A549 (cell line): ENCODE measurements at regions of chr15 and their contacts with region 1.

Region 1: DNA sequence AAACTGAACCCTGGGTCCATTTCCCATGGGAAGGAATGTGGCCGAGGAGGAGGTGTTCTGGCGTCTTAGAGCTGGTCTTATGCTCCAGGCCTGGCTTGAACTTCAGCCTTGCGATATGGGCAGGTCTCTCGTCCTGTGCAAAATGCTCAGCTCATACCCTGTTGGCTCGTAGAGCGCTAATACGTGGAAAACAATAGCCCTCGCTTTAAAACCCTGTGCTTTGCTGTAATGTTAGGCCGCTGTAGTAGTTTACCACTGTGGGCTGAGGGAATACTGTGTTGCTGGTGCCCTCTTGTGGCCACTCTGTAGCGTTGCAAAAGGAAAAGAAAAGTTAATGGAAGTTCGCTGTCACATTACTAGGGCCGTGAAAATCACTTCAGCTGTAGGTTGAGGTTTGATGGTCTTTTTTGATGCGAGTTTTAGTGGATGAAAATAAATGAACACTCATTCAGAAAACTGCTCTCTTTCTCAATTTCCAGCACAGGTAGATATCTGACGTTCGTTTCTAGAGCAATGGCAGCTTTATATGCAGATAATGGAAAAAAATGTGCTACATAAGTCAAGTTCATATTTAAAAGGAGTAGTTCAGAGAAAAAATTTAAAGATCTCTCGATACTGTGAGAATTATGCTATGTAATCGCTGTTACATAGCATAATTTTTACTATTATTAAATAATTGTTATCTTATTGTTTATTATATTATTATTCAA is 92.9 kb downstream of the MCTP2 start:
- DNase-seq: peak; percentile 38 to 62
- ATAC-seq: peak; percentile 84 to 94
- H3K4me3 ChIP-seq: no peak overlapping the region
- H3K27ac ChIP-seq: no peak overlapping the region
- H3K4me1 ChIP-seq: no peaks in the 10 kb centered on the region
- CTCF ChIP-seq: peak; percentile 79
- EP300 ChIP-seq: no peak
- POLR2A ChIP-seq: no peak
- RAD21 ChIP-seq: peak; percentile 79 to 81

Region 2: DNA sequence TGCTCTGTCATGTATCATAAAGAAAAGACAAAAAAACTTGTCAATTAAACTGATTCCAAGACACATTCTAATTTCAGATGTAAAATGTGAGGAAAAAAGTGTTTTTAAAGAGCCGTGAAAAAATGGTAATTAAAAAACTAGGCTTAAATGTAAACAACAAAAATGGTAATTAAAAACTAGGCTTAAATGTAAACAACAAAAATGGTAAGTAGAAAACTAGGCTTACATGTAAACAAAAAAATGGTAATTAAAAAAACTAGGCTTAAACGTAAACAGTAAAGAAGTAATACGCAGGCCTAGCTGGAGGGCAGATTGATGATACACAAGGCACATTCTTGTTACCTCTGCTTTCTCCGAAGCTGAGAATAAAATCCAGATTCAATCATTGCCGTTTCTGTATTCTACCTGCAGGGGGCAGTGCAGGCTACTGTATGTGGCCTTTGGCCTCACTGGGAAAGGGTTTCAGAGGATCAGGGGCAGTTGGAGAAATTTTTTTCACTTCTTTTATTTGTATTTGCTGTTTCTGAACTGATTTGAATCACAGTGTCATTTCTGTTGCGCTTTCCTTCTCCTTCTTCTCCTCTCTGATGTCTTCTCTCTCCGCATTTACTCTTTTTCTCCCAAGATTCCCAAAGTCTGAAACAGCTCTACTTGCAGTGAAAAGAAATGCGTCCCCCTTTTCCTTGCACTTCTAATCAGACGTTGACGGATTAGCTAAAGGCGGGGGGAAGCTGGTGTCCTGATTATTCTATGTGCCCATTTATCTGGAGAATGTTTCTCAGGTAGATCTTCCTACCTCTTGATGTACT is 160.1 kb before region 1 on chr15:
- CTCF ChIA-PET with region 1: interaction called, 16 read pairs
- POLR2A ChIA-PET with region 1: no interaction called
- DNase-seq: peak in 1 of 2 experiments; percentile 39
- ATAC-seq: peak in 1 of 2 experiments; percentile 67; a peak in 3 of 6 replicates
- H3K4me3 ChIP-seq: no peak overlapping the region
- H3K27ac ChIP-seq: no peak overlapping the region
- H3K4me1 ChIP-seq: no peaks in the 10 kb centered on the region
- CTCF ChIP-seq: peak; percentile 39; the same call in 2 of the 3 replicates
- EP300 ChIP-seq: no peak
- POLR2A ChIP-seq: no peak
- RAD21 ChIP-seq: peak; percentile 43 to 66; a peak in 4 of 5 replicates

Region 3: GRCh38 chr15:94306700-94307650 is 17.3 kb before region 1 on chr15:
- CTCF ChIA-PET with region 1: interaction called, 22 read pairs
- POLR2A ChIA-PET with region 1: no interaction called
- DNase-seq: no peak
- ATAC-seq: no peak
- H3K4me3 ChIP-seq: no peak overlapping the region
- H3K27ac ChIP-seq: no peak overlapping the region
- H3K4me1 ChIP-seq: no peaks in the 10 kb centered on the region
- CTCF ChIP-seq: no peak
- EP300 ChIP-seq: no peak
- POLR2A ChIP-seq: no peak
- RAD21 ChIP-seq: no peak

Region 4: GRCh38 chr15:94335616-94336015 is 11.3 kb after region 1 on chr15:
- CTCF ChIA-PET with region 1: interaction called, 37 read pairs
- POLR2A ChIA-PET with region 1: no interaction called
- DNase-seq: no peak
- ATAC-seq: no peak
- H3K4me3 ChIP-seq: no peak overlapping the region
- H3K27ac ChIP-seq: no peak overlapping the region
- H3K4me1 ChIP-seq: no peaks in the 10 kb centered on the region
- CTCF ChIP-seq: no peak
- EP300 ChIP-seq: no peak
- POLR2A ChIP-seq: no peak
- RAD21 ChIP-seq: no peak

Region 5: GRCh38 chr15:94503293-94503692 is 179.0 kb after region 1 on chr15:
- CTCF ChIA-PET with region 1: no interaction called
- POLR2A ChIA-PET with region 1: no interaction called
- DNase-seq: no peak
- ATAC-seq: no peak
- H3K4me3 ChIP-seq: no peak overlapping the region
- H3K27ac ChIP-seq: no peak overlapping the region
- H3K4me1 ChIP-seq: no peaks in the 10 kb centered on the region
- CTCF ChIP-seq: no peak
- EP300 ChIP-seq: no peak
- POLR2A ChIP-seq: no peak
- RAD21 ChIP-seq: no peak

Region 6: DNA sequence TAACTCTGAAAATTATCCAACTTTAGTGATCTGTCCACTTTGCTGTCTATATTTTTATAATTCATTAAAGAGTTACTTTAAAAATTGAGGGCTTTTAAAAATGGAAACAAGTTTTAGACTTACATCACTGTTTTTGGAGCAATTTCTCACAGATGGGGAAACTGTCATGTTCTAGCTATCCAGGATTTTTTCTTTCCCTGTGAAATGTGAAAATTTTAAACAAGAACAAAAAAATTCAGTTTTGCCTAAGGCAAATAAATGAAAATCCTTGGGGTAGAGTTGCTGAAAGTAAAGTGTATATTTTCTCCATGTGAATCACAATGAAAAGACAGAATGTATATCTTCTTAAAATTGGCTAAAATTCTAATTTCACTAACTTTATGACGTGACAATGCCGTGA is 460.8 kb after region 1 on chr15:
- CTCF ChIA-PET with region 1: no interaction called
- POLR2A ChIA-PET with region 1: no interaction called
- DNase-seq: no peak
- ATAC-seq: no peak
- H3K4me3 ChIP-seq: no peak overlapping the region
- H3K27ac ChIP-seq: no peak overlapping the region
- H3K4me1 ChIP-seq: no peaks in the 10 kb centered on the region
- CTCF ChIP-seq: no peak
- EP300 ChIP-seq: no peak
- POLR2A ChIP-seq: no peak
- RAD21 ChIP-seq: no peak